OCI-LY7 (cell line): ENCODE measurements at regions of chr22 and their contacts with region 1.

Region 1: DNA sequence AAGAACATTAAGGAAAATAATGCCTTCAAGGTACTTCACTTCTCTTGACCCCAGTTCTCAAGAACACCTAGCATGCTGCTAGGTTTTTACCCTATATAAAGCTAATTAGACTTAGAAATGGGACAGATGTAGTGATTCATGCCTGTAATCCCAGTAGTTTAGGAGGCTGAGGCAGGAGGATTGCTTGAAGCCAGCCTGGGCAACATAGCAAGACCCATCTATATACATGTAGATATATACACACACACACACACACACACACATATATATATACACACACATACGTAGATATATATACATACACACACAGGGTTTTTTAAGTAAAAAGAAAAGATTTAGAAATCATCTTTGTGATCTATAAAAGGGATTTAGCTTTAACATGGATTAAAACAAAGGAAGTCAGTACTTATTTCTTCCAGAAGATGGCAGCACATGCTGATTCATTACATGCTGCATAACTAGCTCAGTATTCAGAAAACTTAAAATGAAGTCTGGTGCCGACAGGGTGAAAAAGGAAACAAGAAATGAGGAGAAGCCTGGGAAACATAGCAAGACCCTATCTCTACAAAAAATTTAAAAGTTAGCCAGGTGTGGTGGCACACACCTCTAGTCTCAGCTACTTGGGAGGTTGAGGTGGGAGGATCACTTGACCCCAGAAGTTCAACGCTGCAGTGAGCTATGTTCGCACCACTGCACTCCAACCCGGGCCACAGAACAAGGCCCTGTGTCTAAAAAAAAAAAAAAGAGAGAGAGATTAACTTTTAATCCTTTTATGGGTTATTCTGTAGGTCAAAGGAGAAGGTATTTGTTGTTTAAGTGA is 28.5 kb upstream of the RBX1 start:
- DNase-seq: peak; percentile 74
- H3K4me3 ChIP-seq: no peak overlapping the region
- H3K27ac ChIP-seq: no peak overlapping the region
- H3K4me1 ChIP-seq: no peaks in the 10 kb centered on the region
- CTCF ChIP-seq: peak; percentile 95

Region 2: GRCh38 chr22:40797427-40797826 is 125.3 kb before region 1 on chr22:
- CTCF ChIA-PET with region 1: no interaction called
- POLR2A ChIA-PET with region 1: no interaction called
- intact Hi-C with region 1: no loop called
- DNase-seq: no peak
- H3K4me3 ChIP-seq: no peak overlapping the region
- H3K27ac ChIP-seq: no peak overlapping the region
- H3K4me1 ChIP-seq: no peaks in the 10 kb centered on the region
- CTCF ChIP-seq: no peak

Region 3: DNA sequence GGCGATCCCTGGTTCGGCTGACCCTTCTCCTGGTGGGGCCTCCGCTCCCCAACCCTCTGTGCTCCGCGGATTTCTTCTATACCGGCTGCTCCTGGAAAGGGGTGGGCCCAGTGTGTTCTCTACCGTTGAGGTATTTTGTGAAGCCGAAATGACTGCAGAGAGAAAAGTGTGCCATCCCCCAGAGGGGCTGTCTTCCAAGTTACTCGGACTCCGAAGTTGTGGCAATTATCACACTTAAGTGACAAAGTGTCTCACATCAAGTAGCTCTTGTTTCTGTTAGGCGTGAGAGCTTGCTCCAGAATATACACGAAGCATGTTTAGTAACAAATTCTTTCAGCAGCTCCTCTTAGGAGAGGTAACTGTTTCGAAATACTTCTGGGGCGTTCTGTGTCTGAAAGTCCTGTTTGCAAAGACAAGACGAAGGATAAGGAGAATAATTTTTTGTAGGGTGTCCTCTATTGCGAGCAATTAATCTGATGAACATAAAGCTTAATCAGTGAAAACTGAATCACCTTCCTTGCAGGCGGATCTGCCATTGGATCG is 65.3 kb before region 1 on chr22:
- CTCF ChIA-PET with region 1: no interaction called
- POLR2A ChIA-PET with region 1: no interaction called
- intact Hi-C with region 1: no loop called
- DNase-seq: no peak
- H3K4me3 ChIP-seq: peak overlapping the region; percentile 95
- H3K27ac ChIP-seq: peak overlapping the region; percentile 85
- H3K4me1 ChIP-seq: peaks cover 38% of the 10 kb centered on the region
- CTCF ChIP-seq: no peak

Region 4: GRCh38 chr22:41146573-41146972 is 223.9 kb after region 1 on chr22:
- CTCF ChIA-PET with region 1: no interaction called
- POLR2A ChIA-PET with region 1: no interaction called
- intact Hi-C with region 1: loop called (anchors 10 kb)
- DNase-seq: no peak
- H3K4me3 ChIP-seq: no peak overlapping the region
- H3K27ac ChIP-seq: no peak overlapping the region
- H3K4me1 ChIP-seq: no peaks in the 10 kb centered on the region
- CTCF ChIP-seq: no peak

Region 5: DNA sequence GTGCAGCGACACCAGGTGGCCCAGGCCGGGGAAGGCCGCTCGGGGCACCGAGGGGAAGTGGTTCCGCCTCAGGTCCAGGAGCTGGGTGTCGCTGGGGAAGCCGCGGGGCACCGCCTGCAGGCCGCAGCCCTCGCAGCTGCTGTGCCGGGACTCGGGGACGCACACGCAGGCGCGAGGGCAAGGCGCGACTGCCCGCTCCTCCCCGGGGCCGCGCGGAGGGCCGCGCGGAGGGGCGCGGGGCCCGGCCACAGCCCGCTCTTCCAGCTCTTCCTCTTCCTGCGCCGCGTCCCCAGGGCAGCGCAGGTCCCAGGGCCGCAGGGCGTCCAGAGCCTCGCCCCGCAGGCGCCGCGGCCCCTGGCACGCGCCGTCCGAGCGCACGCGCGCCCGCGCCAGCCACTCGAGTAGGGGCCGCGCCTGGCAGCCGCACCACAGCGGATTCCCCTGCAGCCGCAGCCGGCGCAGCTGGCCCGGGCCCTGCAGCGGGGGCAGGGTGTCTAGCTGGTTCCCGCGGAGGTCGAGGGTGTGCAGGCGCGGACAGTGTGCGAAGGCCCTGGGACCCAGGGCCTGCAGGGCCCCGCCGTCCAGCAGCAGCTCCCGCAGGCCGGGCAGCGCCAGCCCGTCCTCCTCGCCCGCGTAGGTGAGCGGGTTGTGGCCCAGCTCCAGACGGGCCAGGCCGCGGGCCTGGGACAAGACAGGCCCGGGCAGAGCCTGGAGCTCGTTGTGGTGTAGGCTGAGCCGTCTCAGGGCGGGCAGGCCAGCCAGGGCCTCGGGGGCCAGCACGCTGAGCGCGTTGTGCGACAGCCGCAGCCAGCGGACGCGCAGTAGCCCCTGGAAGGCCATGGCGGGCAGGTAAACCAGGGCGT is 315.2 kb after region 1 on chr22:
- CTCF ChIA-PET with region 1: interaction called, 10 read pairs
- POLR2A ChIA-PET with region 1: no interaction called
- intact Hi-C with region 1: loop called (anchors 1 kb)
- DNase-seq: peak; percentile 79
- H3K4me3 ChIP-seq: peak overlapping the region; percentile 24
- H3K27ac ChIP-seq: no peak overlapping the region
- H3K4me1 ChIP-seq: peaks cover 9% of the 10 kb centered on the region
- CTCF ChIP-seq: peak; percentile 76